HEK293T (cell line): ENCODE measurements at regions of chr5 and their contacts with region 1.

Region 1: DNA sequence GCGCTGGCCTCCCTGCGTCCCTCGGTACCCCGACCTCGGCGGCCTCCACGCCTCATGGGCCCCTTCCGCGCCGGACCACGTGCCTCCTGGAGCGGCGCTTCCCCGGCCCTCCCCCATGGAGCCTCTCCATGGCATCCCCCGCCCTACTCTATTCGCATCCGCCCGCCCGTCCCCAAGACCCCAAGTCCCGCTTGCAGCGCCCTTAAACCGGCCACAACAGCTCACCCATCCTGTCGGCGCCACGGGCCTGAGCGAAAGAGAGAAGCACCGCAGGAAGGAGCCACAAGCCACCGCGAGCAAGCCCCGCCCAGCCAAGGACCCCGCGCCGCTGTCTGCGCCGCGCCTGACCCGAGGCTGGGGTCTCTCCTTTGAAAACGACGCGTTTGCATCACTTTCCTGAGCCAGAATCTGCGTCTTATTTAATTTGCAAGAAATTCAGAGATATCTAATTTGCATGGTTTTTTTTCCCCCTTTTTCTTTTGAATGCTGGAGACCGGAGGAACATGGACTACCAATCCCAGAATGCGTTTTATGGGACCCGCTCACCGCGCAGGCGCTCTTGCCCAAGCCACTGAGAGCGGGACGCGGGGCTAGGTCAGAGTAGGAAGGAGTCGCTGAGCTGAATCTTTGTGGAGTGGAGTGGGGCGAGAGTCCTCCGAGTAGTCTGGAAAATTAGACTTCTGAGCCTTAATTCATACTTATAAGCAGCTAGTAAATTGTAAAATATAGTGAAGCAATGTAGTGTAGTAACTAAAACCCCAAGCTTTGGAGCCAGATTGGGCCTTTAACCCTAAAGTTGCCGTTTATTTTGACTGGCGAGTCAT is at the start of gene RPS23:
- DNase-seq: peak; percentile 88

Region 2: GRCh38 chr5:80799041-80799440 is 1479.3 kb before region 1 on chr5:
- CTCF ChIA-PET with region 1: no interaction called
- POLR2A ChIA-PET with region 1: no interaction called
- DNase-seq: no peak

Region 3: GRCh38 chr5:82265047-82265446 is 13.3 kb before region 1 on chr5:
- CTCF ChIA-PET with region 1: no interaction called
- POLR2A ChIA-PET with region 1: interaction called, 10 read pairs
- DNase-seq: no peak

Region 4: GRCh38 chr5:82295144-82295543 is 16.8 kb after region 1 on chr5:
- CTCF ChIA-PET with region 1: no interaction called
- POLR2A ChIA-PET with region 1: interaction called, 26 read pairs
- DNase-seq: no peak